Left ventricle myocardium inferior (tissue), 1 donor: ENCODE measurements at regions of chr12 and their contacts with region 1.

Region 1: DNA sequence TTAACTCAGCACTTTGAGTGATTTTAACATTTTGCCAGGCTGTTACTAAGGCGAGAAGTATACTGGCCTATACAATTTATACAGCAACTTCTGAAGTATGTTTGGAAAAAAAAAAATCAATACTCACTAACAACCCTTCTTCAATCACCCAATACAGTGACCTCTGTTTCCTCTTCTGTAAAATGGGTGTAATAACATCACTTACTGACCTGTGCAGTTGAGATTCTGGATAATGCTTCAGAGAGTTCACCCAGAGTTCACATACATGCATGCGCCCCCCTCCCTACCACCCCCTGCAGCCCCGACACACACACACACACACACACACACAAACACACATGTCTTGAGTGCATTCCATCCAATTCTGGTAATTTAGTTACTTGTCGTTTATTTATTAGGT is 9.1 kb downstream of the PAH start:
- DNase-seq: no peak
- H3K4me3 ChIP-seq: no peak overlapping the region
- H3K27ac ChIP-seq: no peak overlapping the region
- H3K4me1 ChIP-seq: no peaks in the 10 kb centered on the region
- H3K27me3 ChIP-seq: no peaks in the 10 kb centered on the region
- CTCF ChIP-seq: no peak

Region 2: DNA sequence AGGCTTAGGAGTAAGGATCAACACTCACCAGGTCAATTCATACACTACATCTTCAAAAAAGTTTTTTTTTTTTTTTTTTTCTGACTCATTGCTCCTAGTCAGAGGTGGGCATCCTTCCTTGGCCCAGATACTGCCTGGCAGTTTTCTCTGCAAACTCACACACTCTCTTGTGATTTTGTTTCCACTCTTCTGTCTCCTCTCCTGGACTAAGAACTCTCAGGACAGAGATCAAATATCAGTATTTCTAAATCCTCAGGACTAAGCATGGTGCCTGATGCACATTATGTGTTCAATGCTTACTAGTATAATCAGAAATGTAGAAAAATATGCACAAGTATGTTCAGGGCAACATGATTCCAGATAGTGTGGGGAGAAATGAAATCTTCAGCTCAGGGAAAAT is 19.3 kb after region 1 on chr12:
- intact Hi-C with region 1: loop called (anchors 2 kb)
- DNase-seq: no peak
- H3K4me3 ChIP-seq: no peak overlapping the region
- H3K27ac ChIP-seq: no peak overlapping the region
- H3K4me1 ChIP-seq: no peaks in the 10 kb centered on the region
- H3K27me3 ChIP-seq: peaks cover 50% of the 10 kb centered on the region
- CTCF ChIP-seq: no peak

Region 3: DNA sequence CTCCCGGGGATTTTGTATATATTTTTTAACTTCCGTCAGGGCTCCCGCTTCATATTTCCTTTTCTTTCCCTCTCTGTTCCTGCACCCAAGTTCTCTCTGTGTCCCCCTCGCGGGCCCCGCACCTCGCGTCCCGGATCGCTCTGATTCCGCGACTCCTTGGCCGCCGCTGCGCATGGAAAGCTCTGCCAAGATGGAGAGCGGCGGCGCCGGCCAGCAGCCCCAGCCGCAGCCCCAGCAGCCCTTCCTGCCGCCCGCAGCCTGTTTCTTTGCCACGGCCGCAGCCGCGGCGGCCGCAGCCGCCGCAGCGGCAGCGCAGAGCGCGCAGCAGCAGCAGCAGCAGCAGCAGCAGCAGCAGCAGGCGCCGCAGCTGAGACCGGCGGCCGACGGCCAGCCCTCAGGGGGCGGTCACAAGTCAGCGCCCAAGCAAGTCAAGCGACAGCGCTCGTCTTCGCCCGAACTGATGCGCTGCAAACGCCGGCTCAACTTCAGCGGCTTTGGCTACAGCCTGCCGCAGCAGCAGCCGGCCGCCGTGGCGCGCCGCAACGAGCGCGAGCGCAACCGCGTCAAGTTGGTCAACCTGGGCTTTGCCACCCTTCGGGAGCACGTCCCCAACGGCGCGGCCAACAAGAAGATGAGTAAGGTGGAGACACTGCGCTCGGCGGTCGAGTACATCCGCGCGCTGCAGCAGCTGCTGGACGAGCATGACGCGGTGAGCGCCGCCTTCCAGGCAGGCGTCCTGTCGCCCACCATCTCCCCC is 50.3 kb after region 1 on chr12:
- intact Hi-C with region 1: no loop called
- DNase-seq: no peak
- H3K4me3 ChIP-seq: peak overlapping the region; percentile 62
- H3K27ac ChIP-seq: no peak overlapping the region
- H3K4me1 ChIP-seq: peaks cover 33% of the 10 kb centered on the region
- H3K27me3 ChIP-seq: peaks cover 99% of the 10 kb centered on the region
- CTCF ChIP-seq: no peak

Region 4: DNA sequence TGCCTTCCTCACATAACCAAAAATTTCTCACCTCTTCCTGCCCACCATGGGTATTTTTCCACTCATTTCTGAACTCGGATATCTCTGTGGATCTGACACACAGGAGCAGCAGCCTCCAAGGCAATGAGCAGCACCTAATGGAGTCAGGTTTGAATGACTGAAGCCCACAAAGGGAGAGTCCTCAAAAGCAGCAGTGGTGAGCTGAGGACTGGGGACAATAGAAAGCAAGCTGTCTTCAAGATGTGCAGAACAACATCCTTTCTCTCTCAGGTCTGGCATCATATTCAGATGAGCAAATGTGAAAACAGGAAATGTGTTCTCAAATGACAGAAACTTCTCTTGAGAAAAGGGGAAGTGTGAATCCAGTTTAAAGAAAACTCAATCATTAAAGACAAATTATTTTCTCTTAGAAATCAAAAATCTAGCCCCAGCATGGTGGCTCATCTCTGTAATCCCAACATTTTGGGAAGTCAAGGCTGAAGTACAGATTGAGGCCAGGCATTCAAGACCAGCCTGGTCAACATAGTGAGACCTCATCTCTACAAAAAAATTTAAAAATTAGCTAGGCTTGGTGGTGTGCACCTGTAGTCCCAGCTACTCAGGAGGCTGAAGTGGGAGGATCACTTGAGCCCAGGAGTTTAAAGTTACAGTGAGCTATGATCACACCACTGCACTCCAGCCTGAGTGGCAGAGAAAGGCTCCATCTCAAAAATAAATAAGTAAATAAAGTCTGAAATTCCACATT is 533.7 kb after region 1 on chr12:
- intact Hi-C with region 1: no loop called
- DNase-seq: no peak
- H3K4me3 ChIP-seq: no peak overlapping the region
- H3K27ac ChIP-seq: no peak overlapping the region
- H3K4me1 ChIP-seq: no peaks in the 10 kb centered on the region
- H3K27me3 ChIP-seq: no peaks in the 10 kb centered on the region
- CTCF ChIP-seq: no peak